ENCODE measurements at regions of chr1 and their contacts with region 1.

Region 1: DNA sequence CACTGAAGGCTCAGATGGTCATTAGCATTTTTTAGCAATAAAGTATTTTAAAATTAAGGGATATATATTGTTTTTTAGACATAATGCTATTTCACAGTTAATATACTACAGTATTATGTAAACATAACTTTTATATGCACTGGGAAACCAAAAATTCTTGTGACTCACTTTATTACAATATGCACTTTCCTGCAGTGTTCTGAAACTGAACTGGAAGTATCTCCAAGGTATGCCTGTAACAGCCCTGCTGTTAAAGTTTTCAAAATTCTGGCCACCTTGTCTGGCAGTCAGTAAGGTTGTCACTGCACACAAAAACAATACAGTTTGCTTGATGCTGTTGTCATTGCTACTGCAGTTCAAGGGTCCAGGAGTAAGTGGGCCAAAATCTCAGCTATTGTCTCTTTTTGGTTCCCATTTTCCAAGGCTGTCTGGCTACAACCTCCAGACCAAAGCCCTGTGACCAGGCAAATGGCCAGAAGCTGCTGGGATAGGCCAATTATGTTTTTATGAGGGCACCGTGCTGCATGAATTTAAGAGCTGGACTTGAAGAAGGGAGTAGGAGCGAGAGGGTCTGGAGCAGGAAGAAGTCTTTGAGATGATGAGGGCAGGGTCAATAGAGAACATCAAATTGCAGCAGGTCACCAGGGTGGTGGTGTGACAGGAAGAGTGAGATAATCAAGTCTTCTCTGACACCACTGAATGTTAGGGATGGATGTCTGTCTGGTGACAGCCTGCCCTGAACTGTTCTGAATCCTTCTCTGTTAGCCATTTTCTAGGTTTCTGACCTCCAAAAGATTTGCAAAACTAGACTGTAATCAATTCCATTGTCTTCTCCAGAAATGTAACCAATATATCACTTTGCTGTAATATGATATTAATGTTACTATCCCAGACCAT is 82.3 kb upstream of the CACHD1 start:
- DNase-seq: peak; percentile 53
- ATAC-seq: peak; percentile 94
- H3K4me3 ChIP-seq: no peak overlapping the region; the same call in 1 of the 2 replicates
- H3K27ac ChIP-seq: no peak overlapping the region
- H3K4me1 ChIP-seq: peaks cover 18% of the 10 kb centered on the region
- H3K27me3 ChIP-seq: no peaks in the 10 kb centered on the region
- CTCF ChIP-seq: no peak

Region 2: DNA sequence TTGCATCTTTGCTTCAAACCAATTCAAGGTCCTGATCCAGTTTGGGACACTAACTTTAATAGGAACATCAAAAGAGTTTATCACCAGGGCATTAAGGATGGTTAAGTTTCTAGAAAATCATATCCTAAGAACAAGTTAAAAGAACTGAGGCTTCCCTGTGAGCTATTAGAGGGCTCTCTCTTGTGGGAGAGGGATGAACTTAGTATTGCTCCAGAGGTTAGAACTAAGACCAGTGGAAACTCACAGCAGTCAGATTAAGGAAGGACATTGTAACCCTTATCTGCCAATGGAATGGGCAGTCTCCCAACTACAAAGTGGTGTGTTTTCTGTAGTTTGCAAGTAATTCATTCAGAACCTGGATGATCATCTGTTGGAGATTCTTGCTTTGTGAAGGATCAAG is 147.4 kb before region 1 on chr1:
- CTCF ChIA-PET with region 1: no interaction called
- POLR2A ChIA-PET with region 1: no interaction called
- intact Hi-C with region 1: no loop called
- DNase-seq: no peak
- ATAC-seq: no peak; the same call in 1 of the 2 replicates
- H3K4me3 ChIP-seq: no peak overlapping the region
- H3K27ac ChIP-seq: no peak overlapping the region
- H3K4me1 ChIP-seq: peaks cover 15% of the 10 kb centered on the region
- H3K27me3 ChIP-seq: no peaks in the 10 kb centered on the region
- CTCF ChIP-seq: no peak; the same call in 1 of the 2 replicates

Region 3: DNA sequence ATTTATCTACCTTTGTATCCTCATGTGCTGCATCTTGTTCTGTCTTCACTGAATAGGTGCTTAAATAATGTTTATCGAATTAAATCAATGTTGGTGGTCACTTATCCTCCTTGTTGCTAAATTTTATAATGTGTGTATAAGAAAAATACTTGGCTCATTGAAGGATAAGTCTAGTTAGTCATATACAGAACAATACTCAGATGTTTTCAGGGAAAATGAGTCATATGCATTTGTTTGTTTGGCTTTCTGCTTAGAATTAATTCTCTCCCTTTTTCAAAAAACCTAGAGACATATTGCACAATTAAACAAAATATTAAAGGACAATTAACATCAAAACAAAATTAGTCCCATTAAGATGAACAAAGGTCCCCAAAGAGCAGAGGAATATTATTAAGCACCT is 95.2 kb before region 1 on chr1:
- CTCF ChIA-PET with region 1: no interaction called
- POLR2A ChIA-PET with region 1: no interaction called
- intact Hi-C with region 1: loop called (anchors 5 kb)
- DNase-seq: peak; percentile 72
- ATAC-seq: peak; percentile 70
- H3K4me3 ChIP-seq: no peak overlapping the region
- H3K27ac ChIP-seq: peak overlapping the region; percentile 24
- H3K4me1 ChIP-seq: peaks cover 32% of the 10 kb centered on the region
- H3K27me3 ChIP-seq: no peaks in the 10 kb centered on the region
- CTCF ChIP-seq: no peak

Region 4: GRCh38 chr1:64343105-64343887 is 44.3 kb before region 1 on chr1:
- CTCF ChIA-PET with region 1: no interaction called
- POLR2A ChIA-PET with region 1: no interaction called
- intact Hi-C with region 1: loop called (anchors 5 kb)
- DNase-seq: peak; percentile 99
- ATAC-seq: peak; percentile 89
- H3K4me3 ChIP-seq: peak overlapping the region; percentile 31
- H3K27ac ChIP-seq: peak overlapping the region; percentile 97
- H3K4me1 ChIP-seq: peaks cover 36% of the 10 kb centered on the region
- H3K27me3 ChIP-seq: no peaks in the 10 kb centered on the region
- CTCF ChIP-seq: no peak

Region 5: DNA sequence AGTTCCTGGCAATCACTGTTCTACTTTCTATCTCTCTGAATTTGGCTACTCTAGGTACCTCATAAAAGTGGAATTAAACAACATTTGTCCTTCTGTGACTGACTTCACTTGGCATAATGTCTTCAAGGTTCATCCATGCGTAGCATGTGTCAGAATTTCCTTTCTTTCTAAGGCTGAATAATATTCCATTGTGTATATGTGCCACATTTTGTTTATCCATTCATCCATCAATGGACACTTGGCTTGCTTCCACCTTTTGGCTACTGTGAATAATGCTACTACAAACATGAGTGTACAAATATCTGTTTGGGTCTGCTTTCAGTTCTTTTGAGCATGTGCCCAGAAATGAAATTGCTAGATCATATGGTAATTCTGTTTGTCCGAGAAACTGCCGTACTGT is 97.0 kb after region 1 on chr1:
- CTCF ChIA-PET with region 1: no interaction called
- POLR2A ChIA-PET with region 1: no interaction called
- intact Hi-C with region 1: loop called (anchors 5 kb)
- DNase-seq: peak; percentile 96
- ATAC-seq: peak; percentile 87
- H3K4me3 ChIP-seq: peak overlapping the region; percentile 29; the same call in 1 of the 2 replicates
- H3K27ac ChIP-seq: peak overlapping the region; percentile 43
- H3K4me1 ChIP-seq: peaks cover 15% of the 10 kb centered on the region
- H3K27me3 ChIP-seq: no peaks in the 10 kb centered on the region
- CTCF ChIP-seq: no peak

Region 6: GRCh38 chr1:64535938-64536835 is 148.6 kb after region 1 on chr1:
- CTCF ChIA-PET with region 1: no interaction called
- POLR2A ChIA-PET with region 1: no interaction called
- intact Hi-C with region 1: loop called (anchors 1 kb)
- DNase-seq: peak; percentile 65
- ATAC-seq: peak; percentile 84
- H3K4me3 ChIP-seq: peak overlapping the region; percentile 16; the same call in 1 of the 2 replicates
- H3K27ac ChIP-seq: peak overlapping the region; percentile 4; the same call in 1 of the 2 replicates
- H3K4me1 ChIP-seq: peaks cover 21% of the 10 kb centered on the region
- H3K27me3 ChIP-seq: no peaks in the 10 kb centered on the region
- CTCF ChIP-seq: no peak

Region 7: GRCh38 chr1:64572222-64572900 is 184.7 kb after region 1 on chr1:
- CTCF ChIA-PET with region 1: no interaction called
- POLR2A ChIA-PET with region 1: no interaction called
- intact Hi-C with region 1: no loop called
- DNase-seq: no peak
- ATAC-seq: no peak
- H3K4me3 ChIP-seq: no peak overlapping the region
- H3K27ac ChIP-seq: no peak overlapping the region
- H3K4me1 ChIP-seq: no peaks in the 10 kb centered on the region
- H3K27me3 ChIP-seq: no peaks in the 10 kb centered on the region
- CTCF ChIP-seq: no peak

Region 8: DNA sequence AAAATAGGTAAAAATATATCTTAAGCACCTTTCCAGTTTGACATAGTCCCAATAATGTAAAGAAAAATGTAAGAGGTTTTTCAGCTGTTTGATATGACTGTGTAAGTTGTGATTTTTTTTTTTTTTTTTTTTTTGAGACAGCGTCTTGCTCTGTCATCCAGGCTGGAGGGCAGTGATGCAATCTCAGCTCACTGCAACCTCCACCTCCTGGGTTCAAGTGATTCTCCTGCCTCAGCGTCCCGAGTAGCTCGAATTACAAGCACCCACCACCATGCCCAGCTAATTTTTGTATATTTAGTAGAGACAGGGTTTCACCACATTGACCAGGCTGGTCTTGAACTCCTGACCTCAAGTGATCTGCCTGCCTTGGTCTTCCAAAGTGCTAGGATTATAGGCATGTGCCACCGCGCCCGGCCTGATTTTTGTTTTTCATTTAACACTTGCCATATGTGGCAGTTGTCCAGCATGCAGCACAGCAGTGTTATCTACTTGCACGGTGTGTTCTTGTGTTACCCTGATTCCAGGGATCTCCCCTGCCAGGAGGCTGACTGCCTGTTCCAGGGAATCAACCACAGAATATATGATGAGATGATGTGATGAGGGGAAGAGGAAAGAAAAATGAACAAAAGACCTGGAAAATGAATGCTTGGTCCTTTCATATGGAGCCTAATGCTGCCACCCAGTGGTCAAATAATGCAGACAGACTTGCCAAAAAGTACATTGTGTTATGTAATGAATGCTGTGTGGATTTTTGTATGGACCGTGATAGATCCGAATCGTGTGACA is 436.2 kb after region 1 on chr1:
- CTCF ChIA-PET with region 1: no interaction called
- POLR2A ChIA-PET with region 1: no interaction called
- intact Hi-C with region 1: loop called (anchors 10 kb)
- DNase-seq: peak; percentile 84
- ATAC-seq: peak; percentile 73
- H3K4me3 ChIP-seq: no peak overlapping the region
- H3K27ac ChIP-seq: no peak overlapping the region
- H3K4me1 ChIP-seq: no peaks in the 10 kb centered on the region
- H3K27me3 ChIP-seq: no peaks in the 10 kb centered on the region
- CTCF ChIP-seq: peak; percentile 93